Esophagus muscularis mucosa (tissue), 4 donors: ENCODE measurements at regions of chr15 and their contacts with region 1.

Region 1: DNA sequence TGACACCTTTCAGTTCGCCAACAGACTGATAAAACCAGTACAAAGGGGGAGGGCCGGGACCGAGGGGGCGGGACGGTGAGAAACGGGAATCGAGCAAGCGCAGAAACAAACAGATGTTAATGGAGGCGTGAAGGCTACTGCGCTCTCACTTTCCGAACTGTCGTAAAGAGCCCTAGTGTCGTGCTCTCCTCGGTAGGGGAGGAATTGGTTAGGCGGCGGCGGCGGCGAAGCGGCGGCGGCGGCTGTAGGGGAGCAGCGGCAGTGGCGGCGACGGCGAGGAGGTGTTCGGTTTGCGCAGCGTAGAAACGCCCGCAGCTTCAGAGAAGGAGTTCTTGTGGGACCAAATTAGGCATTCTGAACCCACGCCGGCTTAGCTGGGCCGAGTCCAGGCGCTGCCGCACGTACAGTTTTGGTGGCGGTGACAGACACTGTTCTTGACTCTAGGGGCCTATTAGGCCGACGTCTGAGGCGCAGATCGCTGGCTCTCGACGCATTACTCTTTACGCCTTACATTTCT is at the start of gene RNF111:
- DNase-seq: peak; percentile 94
- H3K4me3 ChIP-seq: peak within 1 kb of the TSS; percentile 65 to 99 (median 81)
- H3K27ac ChIP-seq: peak within 1 kb of the TSS; percentile 86 to 92 (median 88)
- H3K4me1 ChIP-seq: peaks cover 18 to 39% (median 28%) of the 10 kb centered on the region in 4 donors
- H3K27me3 ChIP-seq: no peaks in the 10 kb centered on the region
- CTCF ChIP-seq: no peak
- EP300 ChIP-seq: no peak
- POLR2A ChIP-seq: peak; percentile 66
- total RNA-seq, gene RNF111: 14.1 to 19.9 (median 18.4) TPM

Region 2: GRCh38 chr15:58933281-58934113 is 54.0 kb before region 1 on chr15 and contains the start of gene SLTM:
- intact Hi-C with region 1: loop called (anchors 10 kb)
- DNase-seq: peak; percentile 98
- H3K4me3 ChIP-seq: peak within 1 kb of the TSS; percentile 79 to 95 (median 86)
- H3K27ac ChIP-seq: peak within 1 kb of the TSS; percentile 93 to 100 (median 98)
- H3K4me1 ChIP-seq: peaks cover 20 to 43% (median 33%) of the 10 kb centered on the region in 4 donors
- H3K27me3 ChIP-seq: no peaks in the 10 kb centered on the region
- CTCF ChIP-seq: peak; percentile 9 to 42 (median 23)
- EP300 ChIP-seq: no peak
- POLR2A ChIP-seq: peak; percentile 90
- total RNA-seq, gene SLTM: 69.1 to 88.5 (median 76.3) TPM

Region 3: GRCh38 chr15:59104912-59105732 is 117.6 kb after region 1 on chr15 and contains the start of gene CCNB2:
- intact Hi-C with region 1: loop called (anchors 5 kb)
- DNase-seq: peak; percentile 95
- H3K4me3 ChIP-seq: peak within 1 kb of the TSS; percentile 57 to 68 (median 58)
- H3K27ac ChIP-seq: peak within 1 kb of the TSS in 3 of 4 donors; percentile 23 to 47 (median 34)
- H3K4me1 ChIP-seq: peaks cover 4 to 15% (median 13%) of the 10 kb centered on the region in 4 donors
- H3K27me3 ChIP-seq: no peaks in the 10 kb centered on the region
- CTCF ChIP-seq: no peak
- EP300 ChIP-seq: no peak
- POLR2A ChIP-seq: no peak
- total RNA-seq, gene CCNB2: 1.6 TPM in 1 of 4 donors, not detected in the others

Region 4: DNA sequence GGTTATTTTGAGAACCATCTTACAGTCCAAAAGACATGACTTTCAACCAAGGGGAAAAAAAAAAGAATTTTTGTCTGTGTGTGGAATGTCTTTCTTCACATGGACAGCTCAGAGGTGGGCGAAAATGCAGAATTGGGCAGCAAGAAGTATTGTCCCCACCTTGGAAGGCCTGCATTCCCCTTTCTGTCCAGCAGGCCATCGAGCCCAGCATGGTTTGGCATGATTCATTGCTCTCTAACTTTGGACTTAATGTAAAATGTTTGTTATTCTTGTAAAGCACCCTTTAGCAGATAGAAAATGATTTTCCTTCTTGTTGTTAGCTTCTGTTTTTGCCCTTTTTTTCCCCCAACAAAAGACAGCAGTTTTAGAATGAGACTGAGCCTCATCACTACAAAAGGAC is 372.8 kb after region 1 on chr15:
- intact Hi-C with region 1: loop called (anchors 10 kb)
- DNase-seq: no peak
- H3K4me3 ChIP-seq: no peak overlapping the region
- H3K27ac ChIP-seq: no peak overlapping the region
- H3K4me1 ChIP-seq: peaks cover 0 to 2% (median under 1%) of the 10 kb centered on the region in 4 donors
- H3K27me3 ChIP-seq: no peaks in the 10 kb centered on the region
- CTCF ChIP-seq: peak in 1 of 3 experiments; percentile 22
- EP300 ChIP-seq: no peak
- POLR2A ChIP-seq: no peak